ENCODE measurements at regions of chr15 and their contacts with region 1.

Region 1: DNA sequence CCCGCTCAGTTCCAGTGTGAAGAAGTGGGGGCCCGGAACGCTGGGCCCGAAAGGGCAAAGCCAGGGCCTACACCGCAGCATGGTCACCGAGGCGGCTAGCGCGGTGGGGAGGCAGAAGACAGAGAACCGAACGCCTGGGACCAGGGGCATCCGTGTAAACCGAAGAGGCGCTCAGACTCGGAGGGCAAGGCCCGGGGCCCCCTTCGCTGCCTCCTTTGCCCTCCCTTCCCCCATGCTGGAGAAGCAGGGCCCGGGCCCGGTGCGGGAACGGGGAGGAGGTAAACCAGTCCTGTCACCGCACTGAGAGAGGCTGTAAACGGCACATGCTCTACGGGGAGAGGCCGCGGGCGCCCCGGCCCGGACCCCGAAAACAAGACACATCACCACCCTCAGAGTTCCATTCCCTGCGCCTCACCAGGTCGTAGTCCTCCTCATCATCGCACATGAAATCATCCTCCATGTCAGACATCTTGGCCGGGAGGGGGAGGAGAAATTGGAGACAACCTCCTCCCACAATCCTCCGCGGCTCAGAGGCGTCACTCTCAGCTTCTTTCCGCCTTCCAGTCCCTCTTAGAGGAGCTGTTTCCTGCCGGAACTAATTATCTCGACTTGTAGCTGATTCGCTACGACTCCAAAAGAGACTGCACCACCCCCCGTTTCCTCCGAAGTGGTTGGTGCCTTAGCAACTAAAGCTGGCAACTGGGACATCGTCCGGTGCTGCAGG is at the start of gene COPS2:
- DNase-seq: peak; percentile 97
- H3K4me3 ChIP-seq: peak within 1 kb of the TSS; percentile 96
- H3K27ac ChIP-seq: peak within 1 kb of the TSS; percentile 73
- H3K4me1 ChIP-seq: peaks cover 7% of the 10 kb centered on the region
- H3K27me3 ChIP-seq: no peaks in the 10 kb centered on the region
- CTCF ChIP-seq: no peak
- total RNA-seq, gene COPS2: 47.7 to 69.6 TPM

Region 2: GRCh38 chr15:49046220-49047102 is 108.8 kb before region 1 on chr15 and contains the start of gene SECISBP2L:
- intact Hi-C with region 1: loop called (anchors 10 kb)
- DNase-seq: peak; percentile 96
- H3K4me3 ChIP-seq: peak within 1 kb of the TSS; percentile 100
- H3K27ac ChIP-seq: peak within 1 kb of the TSS; percentile 86
- H3K4me1 ChIP-seq: no peaks in the 10 kb centered on the region
- H3K27me3 ChIP-seq: no peaks in the 10 kb centered on the region
- CTCF ChIP-seq: no peak
- total RNA-seq, gene SECISBP2L: 26.9 to 45.2 TPM

Region 3: GRCh38 chr15:49810720-49811119 is 655.4 kb after region 1 on chr15:
- intact Hi-C with region 1: no loop called
- DNase-seq: no peak
- H3K4me3 ChIP-seq: no peak overlapping the region
- H3K27ac ChIP-seq: no peak overlapping the region
- H3K4me1 ChIP-seq: no peaks in the 10 kb centered on the region
- H3K27me3 ChIP-seq: no peaks in the 10 kb centered on the region
- CTCF ChIP-seq: no peak

Measured in colonic mucosa (tissue), 4 donors.